ENCODE measurements at regions of chr10 and their contacts with region 1.

Region 1: DNA sequence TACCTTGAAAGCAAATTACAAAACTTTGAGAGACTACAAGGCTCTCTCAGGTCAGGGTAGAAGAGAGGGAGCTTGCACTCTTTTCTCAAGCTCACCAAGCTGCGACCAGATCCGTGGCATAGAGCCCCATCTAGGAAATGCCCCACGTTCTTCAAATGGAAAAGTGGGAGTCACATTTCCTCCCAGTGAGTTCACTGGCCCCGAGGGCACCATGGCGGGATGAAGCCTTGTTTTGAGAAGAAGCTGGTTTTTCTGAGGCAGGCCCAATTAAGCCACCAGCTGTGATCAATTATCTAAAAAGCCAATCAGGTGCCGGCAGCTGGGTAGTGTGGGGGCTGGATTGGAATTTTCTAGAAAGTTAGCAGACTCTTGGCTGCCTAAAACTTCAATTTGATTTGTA is 101.4 kb downstream of the ZNF365 start:
- DNase-seq: no peak
- H3K4me3 Mint-ChIP-seq: no peak overlapping the region
- H3K27ac Mint-ChIP-seq: no peak overlapping the region
- H3K4me1 Mint-ChIP-seq: no peaks in the 10 kb centered on the region
- H3K27me3 Mint-ChIP-seq: peaks cover 19% of the 10 kb centered on the region

Region 2: GRCh38 chr10:61618388-61618961 is 857.1 kb before region 1 on chr10:
- intact Hi-C with region 1: loop called (anchors 5 kb)
- DNase-seq: no peak
- H3K4me3 Mint-ChIP-seq: no peak overlapping the region
- H3K27ac Mint-ChIP-seq: no peak overlapping the region
- H3K4me1 Mint-ChIP-seq: no peaks in the 10 kb centered on the region
- H3K27me3 Mint-ChIP-seq: peaks cover 5% of the 10 kb centered on the region

Region 3: GRCh38 chr10:62166331-62167131 is 309.0 kb before region 1 on chr10:
- intact Hi-C with region 1: no loop called
- DNase-seq: no peak
- H3K4me3 Mint-ChIP-seq: no peak overlapping the region
- H3K27ac Mint-ChIP-seq: no peak overlapping the region
- H3K4me1 Mint-ChIP-seq: peaks cover 12% of the 10 kb centered on the region
- H3K27me3 Mint-ChIP-seq: no peaks in the 10 kb centered on the region

Measured in activated T-helper 1 cell treated with anti-CD3 and anti-CD28 coated beads, Interleukin-12 subunit alpha, Interleukin-12 subunit beta, Interleukin-2, Interleukin-4 antibody, amounts not matched to agents 30 ng/mL and 10 ng/mL and 1 ng/mL, durations not matched to agents 14 hours and 24 hours and 36 hours (primary cell).